B cell (primary cell): ENCODE measurements at regions of chr14 and their contacts with region 1.

Region 1: GRCh38 chr14:55339770-55340169 is 68.5 kb downstream of the FBXO34 start:
- DNase-seq: no peak
- ATAC-seq: no peak
- H3K4me3 ChIP-seq: no peak overlapping the region
- H3K4me3 Mint-ChIP-seq: no peak overlapping the region
- H3K27ac ChIP-seq: no peak overlapping the region
- H3K27ac Mint-ChIP-seq: no peak overlapping the region
- H3K4me1 ChIP-seq: peaks cover 4% of the 10 kb centered on the region in 2 donors
- H3K4me1 Mint-ChIP-seq: peaks cover 41% of the 10 kb centered on the region
- H3K27me3 ChIP-seq: no peaks in the 10 kb centered on the region
- H3K27me3 Mint-ChIP-seq: no peaks in the 10 kb centered on the region
- CTCF ChIP-seq: no peak

Region 2: GRCh38 chr14:55191203-55192053 is 148.3 kb before region 1 on chr14 and contains the start of gene DLGAP5:
- CTCF ChIA-PET with region 1: no interaction called
- POLR2A ChIA-PET with region 1: no interaction called
- intact Hi-C with region 1: no loop called
- DNase-seq: peak; percentile 91
- ATAC-seq: peak; percentile 98
- H3K4me3 ChIP-seq: peak within 1 kb of the TSS; percentile 38 to 72 (median 68)
- H3K4me3 Mint-ChIP-seq: peak within 1 kb of the TSS; percentile 89
- H3K27ac ChIP-seq: peak within 1 kb of the TSS in 1 of 2 donors; percentile 68
- H3K27ac Mint-ChIP-seq: peak within 1 kb of the TSS; percentile 42
- H3K4me1 ChIP-seq: peaks cover 9 to 13% of the 10 kb centered on the region in 2 donors
- H3K4me1 Mint-ChIP-seq: peaks cover 14% of the 10 kb centered on the region
- H3K27me3 ChIP-seq: no peaks in the 10 kb centered on the region
- H3K27me3 Mint-ChIP-seq: no peaks in the 10 kb centered on the region
- CTCF ChIP-seq: no peak
- total RNA-seq, gene DLGAP5: not detected in 2 replicates

Region 3: DNA sequence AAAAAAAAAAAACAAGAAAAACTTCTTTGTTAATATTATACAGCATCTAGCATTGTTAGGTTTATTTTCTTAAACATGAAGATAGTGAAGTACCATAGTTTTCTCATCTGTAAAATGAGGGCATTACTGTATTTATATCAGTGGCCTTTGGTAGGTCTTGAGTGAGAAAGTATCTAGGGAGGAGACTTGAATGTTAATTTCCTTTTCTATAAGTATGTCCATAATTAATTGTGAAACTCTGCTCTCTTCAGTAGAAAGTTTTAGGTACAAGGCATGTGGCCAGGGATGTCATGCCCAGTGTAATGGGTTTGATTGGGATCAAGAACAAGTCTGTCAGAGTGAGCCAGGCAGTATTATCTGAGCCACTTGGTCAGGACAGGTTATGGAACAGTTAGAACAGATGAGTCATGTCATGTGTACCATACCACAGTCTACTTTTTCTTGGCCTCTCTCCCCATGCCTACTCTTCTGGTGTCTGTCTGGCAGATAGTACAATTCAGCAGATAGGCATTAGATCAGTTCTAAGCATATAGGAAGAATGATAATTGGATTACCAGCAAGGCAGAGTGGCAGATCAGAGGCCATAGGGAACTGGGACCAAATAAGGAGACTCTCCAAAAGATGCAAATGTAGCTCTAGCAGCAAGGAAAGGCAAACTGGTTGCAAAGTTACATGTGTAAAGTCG is 38.2 kb before region 1 on chr14:
- CTCF ChIA-PET with region 1: no interaction called
- POLR2A ChIA-PET with region 1: no interaction called
- intact Hi-C with region 1: loop called (anchors 5 kb)
- DNase-seq: no peak
- ATAC-seq: no peak
- H3K4me3 ChIP-seq: no peak overlapping the region
- H3K4me3 Mint-ChIP-seq: no peak overlapping the region
- H3K27ac ChIP-seq: no peak overlapping the region
- H3K27ac Mint-ChIP-seq: no peak overlapping the region
- H3K4me1 ChIP-seq: peaks cover 5 to 8% of the 10 kb centered on the region in 2 donors
- H3K4me1 Mint-ChIP-seq: peaks cover 37% of the 10 kb centered on the region
- H3K27me3 ChIP-seq: no peaks in the 10 kb centered on the region
- H3K27me3 Mint-ChIP-seq: no peaks in the 10 kb centered on the region
- CTCF ChIP-seq: no peak

Region 4: DNA sequence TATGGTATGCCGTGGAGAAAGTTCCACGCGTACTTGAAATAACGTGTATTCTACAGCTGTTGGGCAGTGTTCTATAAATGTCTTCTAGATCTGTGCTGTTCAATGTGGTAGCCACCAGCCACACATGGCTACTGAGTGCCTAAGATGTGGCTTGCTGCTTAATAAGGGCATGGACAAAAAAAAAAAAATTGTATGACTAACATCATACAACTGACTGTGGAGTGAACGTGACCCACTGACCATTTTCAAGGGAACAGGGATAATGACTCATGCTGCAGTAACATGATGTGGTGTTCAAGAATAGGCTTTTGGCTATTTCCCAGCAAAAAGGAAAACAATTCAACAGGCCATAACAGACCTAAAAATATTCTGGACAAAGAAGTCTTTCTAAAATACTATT is 58.9 kb after region 1 on chr14:
- CTCF ChIA-PET with region 1: no interaction called
- POLR2A ChIA-PET with region 1: no interaction called
- intact Hi-C with region 1: no loop called
- DNase-seq: no peak
- ATAC-seq: no peak
- H3K4me3 ChIP-seq: no peak overlapping the region
- H3K4me3 Mint-ChIP-seq: no peak overlapping the region
- H3K27ac ChIP-seq: no peak overlapping the region
- H3K27ac Mint-ChIP-seq: no peak overlapping the region
- H3K4me1 ChIP-seq: no peaks in the 10 kb centered on the region
- H3K4me1 Mint-ChIP-seq: peaks cover 1% of the 10 kb centered on the region
- H3K27me3 ChIP-seq: no peaks in the 10 kb centered on the region
- H3K27me3 Mint-ChIP-seq: no peaks in the 10 kb centered on the region
- CTCF ChIP-seq: no peak

Region 5: DNA sequence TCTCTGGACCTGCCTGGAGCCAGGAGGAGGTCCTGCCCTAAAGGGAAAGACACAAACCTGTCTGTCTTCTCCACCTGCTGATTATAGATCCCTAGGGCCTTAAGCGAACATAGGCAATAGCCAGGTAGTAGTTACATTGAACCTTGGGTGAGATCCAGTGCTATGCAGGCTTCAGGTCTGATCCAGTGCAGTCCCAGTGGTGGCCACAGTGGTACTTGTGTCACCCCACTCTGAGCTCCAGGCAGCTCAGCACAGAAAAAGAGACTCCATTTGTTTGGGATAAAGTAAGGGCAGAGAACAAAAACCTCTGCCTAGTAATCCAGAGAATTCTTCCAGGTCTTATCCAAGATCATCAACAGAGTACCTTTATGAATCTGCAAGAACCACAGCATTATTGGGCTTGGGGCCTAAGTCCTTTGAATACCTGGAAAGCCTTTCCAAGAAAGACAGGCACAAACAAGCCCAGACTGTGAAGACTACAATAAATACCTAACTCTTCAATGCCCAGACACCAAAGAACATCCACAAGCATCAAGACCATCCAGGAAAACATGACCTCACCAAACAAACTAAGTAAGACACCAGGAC is 179.8 kb after region 1 on chr14:
- CTCF ChIA-PET with region 1: no interaction called
- POLR2A ChIA-PET with region 1: no interaction called
- intact Hi-C with region 1: no loop called
- DNase-seq: no peak
- ATAC-seq: no peak
- H3K4me3 ChIP-seq: no peak overlapping the region
- H3K4me3 Mint-ChIP-seq: no peak overlapping the region
- H3K27ac ChIP-seq: no peak overlapping the region
- H3K27ac Mint-ChIP-seq: no peak overlapping the region
- H3K4me1 ChIP-seq: no peaks in the 10 kb centered on the region
- H3K4me1 Mint-ChIP-seq: no peaks in the 10 kb centered on the region
- H3K27me3 ChIP-seq: no peaks in the 10 kb centered on the region
- H3K27me3 Mint-ChIP-seq: peaks cover 3% of the 10 kb centered on the region
- CTCF ChIP-seq: no peak